Activated CD8-positive, alpha-beta T cell treated with anti-CD3 and anti-CD28 coated beads, Interleukin-2, amount 10 ng/mL, durations not matched to agents 7 days and 5 days (primary cell): ENCODE measurements at regions of chr7 and their contacts with region 1.

Region 1: DNA sequence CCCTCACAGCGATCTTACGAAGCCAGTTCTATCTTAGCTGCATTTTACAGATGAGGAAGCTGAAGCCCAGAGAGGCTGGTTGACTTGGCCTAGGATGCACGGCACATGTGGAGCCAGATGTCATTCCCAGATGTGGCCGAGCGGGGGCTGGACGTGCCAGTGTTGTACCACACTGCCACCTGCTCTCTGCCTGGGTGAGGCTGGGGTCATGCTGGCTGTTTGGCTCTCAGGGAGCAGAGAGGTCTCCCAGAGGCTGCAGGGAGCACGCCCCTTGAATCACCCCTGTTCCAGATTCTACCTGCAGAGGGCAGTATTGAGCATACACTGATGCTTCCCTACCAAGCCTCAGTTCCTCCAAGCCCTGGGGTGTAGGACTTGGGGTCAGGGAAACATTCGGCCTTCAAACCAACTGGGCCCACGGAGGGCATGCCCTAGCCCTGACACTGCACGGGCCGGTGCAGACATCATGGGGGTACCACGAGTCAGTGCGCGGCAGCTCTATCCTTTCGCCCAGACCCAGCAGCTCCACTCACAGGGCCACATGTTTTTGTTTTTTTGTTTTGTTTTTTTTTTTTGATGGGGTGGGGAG is 3.8 kb upstream of the GTF2IRD1 start:
- DNase-seq: peak; percentile 74
- ATAC-seq: peak; percentile 24
- H3K4me3 Mint-ChIP-seq: no peak overlapping the region
- H3K27ac Mint-ChIP-seq: no peak overlapping the region
- H3K4me1 Mint-ChIP-seq: peaks cover 18% of the 10 kb centered on the region
- H3K27me3 Mint-ChIP-seq: peaks cover 18% of the 10 kb centered on the region

Region 2: DNA sequence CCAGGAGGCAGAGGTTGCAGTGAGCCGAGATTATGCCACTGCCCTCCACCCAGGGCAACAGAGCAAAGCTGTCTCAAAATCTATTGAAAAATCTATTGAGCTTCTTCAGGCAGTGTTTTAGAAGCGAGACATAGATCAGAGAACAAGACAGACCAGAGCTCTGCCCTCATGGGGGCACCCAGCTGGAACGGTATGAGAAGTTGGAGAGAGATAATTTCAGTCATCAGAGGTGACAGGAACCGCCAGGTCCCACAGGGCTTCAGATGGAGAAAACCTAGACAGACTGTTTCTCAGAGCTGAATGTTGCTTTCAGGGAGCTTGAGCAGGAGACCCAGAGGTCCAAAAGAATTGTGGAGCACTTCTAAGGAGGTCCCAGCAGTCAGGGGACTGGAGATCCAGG is 10.4 kb before region 1 on chr7:
- CTCF ChIA-PET with region 1: interaction called, 11 read pairs
- POLR2A ChIA-PET with region 1: no interaction called
- DNase-seq: no peak
- ATAC-seq: no peak
- H3K4me3 Mint-ChIP-seq: no peak overlapping the region
- H3K27ac Mint-ChIP-seq: no peak overlapping the region
- H3K4me1 Mint-ChIP-seq: no peaks in the 10 kb centered on the region
- H3K27me3 Mint-ChIP-seq: no peaks in the 10 kb centered on the region